CD8-positive, alpha-beta T cell (primary cell): ENCODE measurements at regions of chr15 and their contacts with region 1.

Region 1: DNA sequence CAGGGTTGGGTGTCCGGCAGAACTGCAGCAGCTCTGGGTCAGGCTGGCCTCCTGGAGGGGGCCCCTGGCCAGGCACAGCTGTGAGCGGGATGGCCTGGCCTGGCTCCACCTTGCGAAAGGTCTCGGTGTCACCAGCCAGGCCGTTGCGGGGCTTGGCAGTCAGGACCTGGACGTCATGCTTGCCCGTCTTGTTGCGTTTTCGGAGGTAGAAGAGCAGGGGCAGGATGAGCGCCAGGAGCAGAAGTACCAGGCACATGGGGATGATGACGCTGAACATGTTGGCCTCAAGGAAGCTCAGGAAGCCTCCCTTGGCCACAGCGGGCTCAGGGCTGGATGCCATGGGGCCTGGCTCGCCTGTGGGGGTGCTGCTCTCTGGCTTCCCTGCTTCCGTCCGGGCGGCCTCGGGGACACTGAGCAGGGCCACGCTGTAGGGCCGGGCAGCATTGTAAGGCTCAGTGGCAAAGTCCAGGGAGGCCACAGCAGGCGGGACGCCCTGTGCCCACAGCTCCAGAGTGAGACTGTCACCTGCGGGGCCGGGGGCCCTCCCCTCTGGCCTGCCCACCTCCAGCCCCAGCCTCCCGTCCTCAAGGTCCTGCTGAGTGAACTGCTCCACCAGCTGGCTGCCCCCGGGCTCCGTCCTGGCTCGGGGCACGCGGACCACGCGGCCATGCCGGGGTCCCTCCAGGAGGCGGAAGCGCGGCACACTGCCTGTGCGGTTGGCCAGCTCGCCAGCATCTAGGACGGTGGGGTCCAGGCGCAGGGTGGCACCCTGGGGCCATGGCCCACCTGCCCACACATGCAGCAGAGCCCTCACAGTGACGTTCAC is 28.1 kb downstream of the SNX33 start:
- DNase-seq: no peak
- ATAC-seq: no peak
- H3K4me3 ChIP-seq: no peak overlapping the region
- H3K4me3 Mint-ChIP-seq: no peak overlapping the region
- H3K27ac ChIP-seq: no peak overlapping the region
- H3K27ac Mint-ChIP-seq: no peak overlapping the region
- H3K4me1 ChIP-seq: no peaks in the 10 kb centered on the region
- H3K4me1 Mint-ChIP-seq: no peaks in the 10 kb centered on the region
- H3K27me3 ChIP-seq: no peaks in the 10 kb centered on the region
- H3K27me3 Mint-ChIP-seq: no peaks in the 10 kb centered on the region
- CTCF ChIP-seq: no peak

Region 2: GRCh38 chr15:75702436-75702835 is 26.6 kb after region 1 on chr15:
- CTCF ChIA-PET with region 1: no interaction called
- POLR2A ChIA-PET with region 1: no interaction called
- intact Hi-C with region 1: loop called in 1 of 2 experiments (anchors 1 kb)
- DNase-seq: no peak
- ATAC-seq: no peak
- H3K4me3 ChIP-seq: no peak overlapping the region
- H3K4me3 Mint-ChIP-seq: no peak overlapping the region
- H3K27ac ChIP-seq: no peak overlapping the region
- H3K27ac Mint-ChIP-seq: no peak overlapping the region
- H3K4me1 ChIP-seq: no peaks in the 10 kb centered on the region
- H3K4me1 Mint-ChIP-seq: peaks cover 4% of the 10 kb centered on the region
- H3K27me3 ChIP-seq: no peaks in the 10 kb centered on the region
- H3K27me3 Mint-ChIP-seq: no peaks in the 10 kb centered on the region
- CTCF ChIP-seq: no peak